Activated CD8-positive, alpha-beta T cell treated with anti-CD3 and anti-CD28 coated beads, Interleukin-2, amount 10 ng/mL, durations not matched to agents 7 days and 5 days (primary cell): ENCODE measurements at regions of chr22 and their contacts with region 1.

Region 1: DNA sequence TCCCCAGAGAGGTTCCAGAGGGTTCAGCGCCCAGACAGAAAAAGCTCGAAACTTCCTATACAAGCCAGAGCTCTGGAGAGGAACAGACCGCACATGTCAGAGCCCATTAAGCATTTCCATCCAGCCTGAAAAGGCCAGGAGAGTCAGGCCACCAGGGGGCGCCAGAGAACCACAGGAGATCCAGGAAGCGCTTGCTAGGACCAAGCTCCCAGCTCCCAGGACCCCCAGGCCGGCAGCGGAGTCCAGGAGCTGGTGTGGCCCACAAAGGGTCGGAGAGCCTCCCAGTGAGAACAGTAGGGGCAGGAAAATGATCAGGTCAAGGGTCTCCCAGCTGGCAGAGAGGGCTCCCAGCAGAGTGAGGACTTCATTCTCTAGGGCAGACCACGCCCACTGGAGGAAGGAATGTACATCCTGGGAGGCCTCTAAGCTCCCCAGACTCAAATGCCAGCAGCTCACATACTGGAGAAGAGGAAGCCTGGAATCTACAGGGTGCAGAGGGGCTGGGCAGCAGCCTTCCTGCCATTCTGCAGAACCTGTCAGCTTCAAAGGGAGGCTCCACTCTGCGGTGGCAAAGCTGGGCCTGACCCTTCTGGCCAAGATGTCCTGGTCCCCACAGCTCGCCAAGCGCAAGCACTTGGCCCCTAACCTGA is 2.1 kb upstream of the MEI1 start:
- DNase-seq: peak; percentile 94
- ATAC-seq: peak; percentile 82
- H3K4me3 Mint-ChIP-seq: no peak overlapping the region
- H3K27ac Mint-ChIP-seq: peak overlapping the region; percentile 78
- H3K4me1 Mint-ChIP-seq: peaks cover 12% of the 10 kb centered on the region
- H3K27me3 Mint-ChIP-seq: peaks cover 6% of the 10 kb centered on the region

Region 2: GRCh38 chr22:41666661-41667258 is 30.5 kb before region 1 on chr22:
- CTCF ChIA-PET with region 1: interaction called, 22 read pairs
- POLR2A ChIA-PET with region 1: interaction called, 4 read pairs
- DNase-seq: peak; percentile 95
- ATAC-seq: peak; percentile 97
- H3K4me3 Mint-ChIP-seq: peak overlapping the region; percentile 73
- H3K27ac Mint-ChIP-seq: peak overlapping the region; percentile 95
- H3K4me1 Mint-ChIP-seq: peaks cover 16% of the 10 kb centered on the region
- H3K27me3 Mint-ChIP-seq: no peaks in the 10 kb centered on the region

Region 3: DNA sequence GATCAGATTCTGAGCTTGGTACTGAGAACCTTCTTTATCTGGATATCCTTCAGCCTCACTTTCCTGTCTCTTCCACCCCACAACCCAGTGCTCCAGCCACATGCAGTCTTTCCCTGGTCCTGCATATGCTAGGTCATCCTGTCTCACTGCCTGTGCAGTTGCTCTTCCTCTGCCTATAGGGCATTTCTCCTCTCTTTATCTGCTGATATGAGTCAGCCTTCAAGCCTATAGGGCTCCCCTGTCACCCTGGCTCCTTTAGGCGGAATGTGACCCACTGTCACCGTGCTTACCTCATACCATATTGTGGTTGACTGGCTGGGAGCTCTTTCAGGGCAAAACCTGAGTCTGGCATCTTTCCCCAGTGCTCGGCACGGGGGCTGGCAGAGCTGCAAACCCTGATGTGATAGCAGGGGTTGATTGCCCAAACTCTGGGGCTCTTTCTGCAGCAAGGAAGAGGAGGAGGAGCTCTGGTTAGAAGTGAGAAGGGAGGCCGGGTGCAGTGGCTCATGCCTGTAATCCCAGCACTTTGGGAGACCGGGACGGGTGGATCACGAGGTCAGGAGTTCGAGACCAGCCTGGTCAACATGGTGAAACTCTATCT is 28.4 kb after region 1 on chr22:
- CTCF ChIA-PET with region 1: interaction called, 11 read pairs
- POLR2A ChIA-PET with region 1: no interaction called
- DNase-seq: no peak
- ATAC-seq: no peak
- H3K4me3 Mint-ChIP-seq: no peak overlapping the region
- H3K27ac Mint-ChIP-seq: no peak overlapping the region
- H3K4me1 Mint-ChIP-seq: no peaks in the 10 kb centered on the region
- H3K27me3 Mint-ChIP-seq: peaks cover 4% of the 10 kb centered on the region

Region 4: DNA sequence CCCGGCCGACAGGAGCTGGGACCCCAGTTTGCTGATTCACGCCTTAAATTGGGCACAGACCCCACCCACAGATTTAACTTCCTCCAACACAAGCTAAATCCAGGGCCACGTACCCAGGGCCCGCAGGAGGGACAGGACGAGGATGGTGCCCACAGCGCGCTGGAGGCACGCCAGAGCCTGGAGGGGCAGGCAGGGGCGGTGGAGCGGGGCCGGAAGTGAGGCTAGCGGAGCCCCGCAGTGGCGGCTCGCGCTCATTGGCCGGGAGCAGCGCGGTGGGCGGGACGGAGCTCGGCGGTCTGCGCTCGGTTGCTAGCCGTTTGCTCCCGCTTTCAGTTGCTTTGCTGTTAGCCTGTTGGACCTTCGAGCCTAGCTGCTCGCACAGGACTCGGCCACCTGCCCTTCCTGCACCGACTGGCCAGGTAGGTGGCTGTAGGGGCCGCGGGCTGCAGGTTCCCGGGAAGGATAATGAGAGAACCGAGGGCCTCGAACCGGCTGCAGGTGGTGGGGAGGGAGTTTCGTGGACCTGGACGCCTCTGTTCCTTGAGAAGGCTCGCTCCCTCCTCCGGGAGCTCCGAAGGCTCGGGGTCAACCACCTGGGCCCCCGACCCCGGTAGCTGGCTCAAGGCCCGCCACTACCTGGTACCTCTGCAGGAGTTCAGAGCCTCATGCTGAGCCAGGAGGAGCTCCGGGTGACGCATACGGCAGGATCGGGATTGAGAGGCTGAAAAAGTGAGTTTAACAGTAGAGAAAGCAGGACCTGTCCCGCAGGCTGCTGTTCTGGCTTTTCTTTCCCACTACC is 103.3 kb after region 1 on chr22 and contains the start of gene CCDC134:
- CTCF ChIA-PET with region 1: interaction called, 32 read pairs
- POLR2A ChIA-PET with region 1: interaction called, 8 read pairs
- DNase-seq: peak; percentile 94
- ATAC-seq: peak; percentile 98
- H3K4me3 Mint-ChIP-seq: peak within 1 kb of the TSS; percentile 98
- H3K27ac Mint-ChIP-seq: peak within 1 kb of the TSS; percentile 99
- H3K4me1 Mint-ChIP-seq: peaks cover 43% of the 10 kb centered on the region
- H3K27me3 Mint-ChIP-seq: no peaks in the 10 kb centered on the region
- total RNA-seq, gene CCDC134: 20.3 to 20.9 TPM

Region 5: GRCh38 chr22:41857155-41857859 is 160.1 kb after region 1 on chr22:
- CTCF ChIA-PET with region 1: interaction called, 35 read pairs
- POLR2A ChIA-PET with region 1: interaction called, 4 read pairs
- DNase-seq: peak; percentile 79
- ATAC-seq: peak; percentile 71
- H3K4me3 Mint-ChIP-seq: peak overlapping the region; percentile 12
- H3K27ac Mint-ChIP-seq: peak overlapping the region; percentile 31
- H3K4me1 Mint-ChIP-seq: peaks cover 61% of the 10 kb centered on the region
- H3K27me3 Mint-ChIP-seq: no peaks in the 10 kb centered on the region

Region 6: DNA sequence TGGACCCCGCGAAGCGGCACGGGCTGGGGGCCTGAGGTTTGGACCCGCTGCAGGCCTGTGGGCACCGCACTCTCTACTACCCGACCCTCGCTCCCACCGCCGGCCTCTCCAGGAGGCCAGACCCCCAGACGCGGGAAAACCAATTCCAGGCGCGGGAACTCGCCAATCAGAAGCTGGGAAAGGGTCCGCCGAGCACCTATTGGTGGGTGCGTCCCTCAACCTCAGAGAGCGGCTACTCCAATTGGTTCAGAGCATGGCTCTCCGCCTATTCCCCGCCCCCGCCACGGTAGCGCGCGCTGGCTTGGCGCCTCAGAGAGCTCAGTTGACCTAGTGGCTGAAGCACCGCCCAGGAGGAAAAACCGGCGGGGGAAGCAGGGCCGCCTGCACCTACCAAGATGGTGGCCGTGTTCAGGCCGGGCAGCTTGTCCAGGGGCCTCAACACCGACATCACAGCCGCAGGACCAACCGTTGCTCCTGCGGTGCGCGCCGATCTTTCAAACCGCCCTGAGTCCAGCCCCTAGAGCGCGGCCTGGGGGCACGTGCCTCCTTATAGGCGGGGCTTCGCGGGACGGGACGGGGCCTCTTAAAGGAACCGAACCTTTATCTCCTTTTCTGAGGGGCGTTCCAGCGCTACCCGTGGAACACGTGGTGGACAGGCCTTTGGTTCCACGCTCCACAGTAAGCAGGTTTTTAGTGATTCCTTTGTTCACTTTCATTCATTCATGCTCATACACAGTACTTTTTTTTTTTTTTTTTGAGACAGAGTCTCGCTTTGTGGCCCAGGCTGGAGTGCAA is 249.6 kb after region 1 on chr22 and contains the start of gene CENPM:
- CTCF ChIA-PET with region 1: interaction called, 77 read pairs
- POLR2A ChIA-PET with region 1: interaction called, 8 read pairs
- DNase-seq: peak; percentile 96
- ATAC-seq: peak; percentile 98
- H3K4me3 Mint-ChIP-seq: peak within 1 kb of the TSS; percentile 81
- H3K27ac Mint-ChIP-seq: peak within 1 kb of the TSS; percentile 95
- H3K4me1 Mint-ChIP-seq: peaks cover 41% of the 10 kb centered on the region
- H3K27me3 Mint-ChIP-seq: no peaks in the 10 kb centered on the region
- total RNA-seq, gene CENPM: 83.6 to 83.8 TPM